Calu3 (cell line): ENCODE measurements at regions of chr19 and their contacts with region 1.

Region 1: DNA sequence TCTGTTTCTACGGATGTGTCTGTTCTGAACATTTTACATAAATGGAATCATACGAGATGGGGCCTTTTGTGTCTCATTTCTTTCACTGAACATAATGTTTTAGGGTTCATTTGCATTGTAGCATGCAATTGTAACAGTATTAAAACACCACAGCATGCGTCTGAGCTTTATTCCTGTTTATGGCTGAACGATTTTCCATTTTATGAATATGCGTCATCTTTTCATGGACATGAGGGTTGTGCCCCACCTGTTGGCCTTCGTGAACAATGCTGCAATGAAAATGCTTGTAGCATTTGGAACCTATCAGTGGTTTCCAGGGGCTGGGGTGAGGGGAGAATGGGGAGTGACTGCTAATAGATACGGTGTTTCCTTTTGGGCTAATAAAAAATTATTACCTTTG is 5.1 kb downstream of the OR10H1 start:
- DNase-seq: no peak
- H3K4me3 Mint-ChIP-seq: no peak overlapping the region
- H3K27ac Mint-ChIP-seq: no peak overlapping the region
- H3K4me1 Mint-ChIP-seq: peaks cover 32% of the 10 kb centered on the region
- H3K27me3 Mint-ChIP-seq: no peaks in the 10 kb centered on the region
- CTCF ChIP-seq: no peak

Region 2: GRCh38 chr19:15629003-15629880 is 181.1 kb before region 1 on chr19:
- CTCF ChIA-PET with region 1: interaction called, 7 read pairs
- intact Hi-C with region 1: loop called (anchors 2 kb)
- DNase-seq: peak; percentile 87
- H3K4me3 Mint-ChIP-seq: no peak overlapping the region
- H3K27ac Mint-ChIP-seq: no peak overlapping the region
- H3K4me1 Mint-ChIP-seq: peaks cover 5% of the 10 kb centered on the region
- H3K27me3 Mint-ChIP-seq: no peaks in the 10 kb centered on the region
- CTCF ChIP-seq: peak; percentile 77

Region 3: GRCh38 chr19:15869109-15869555 is 58.8 kb after region 1 on chr19:
- CTCF ChIA-PET with region 1: interaction called, 3 read pairs
- intact Hi-C with region 1: loop called (anchors 5 kb)
- DNase-seq: peak; percentile 66
- H3K4me3 Mint-ChIP-seq: peak overlapping the region; percentile 12
- H3K27ac Mint-ChIP-seq: peak overlapping the region; percentile 65
- H3K4me1 Mint-ChIP-seq: peaks cover 23% of the 10 kb centered on the region
- H3K27me3 Mint-ChIP-seq: no peaks in the 10 kb centered on the region
- CTCF ChIP-seq: peak; percentile 43